ENCODE measurements at regions of chr10 and their contacts with region 1.

Region 1: GRCh38 chr10:88553116-88553752 is 29.9 kb downstream of the RNLS start:
- DNase-seq: peak; percentile 11 to 78
- H3K4me3 ChIP-seq: no peak overlapping the region
- H3K27ac ChIP-seq: peak overlapping the region; percentile 3; the same call in 1 of the 2 replicates
- H3K4me1 ChIP-seq: peaks cover 6% of the 10 kb centered on the region
- H3K27me3 ChIP-seq: no peaks in the 10 kb centered on the region
- CTCF ChIP-seq: peak; percentile 76

Region 2: DNA sequence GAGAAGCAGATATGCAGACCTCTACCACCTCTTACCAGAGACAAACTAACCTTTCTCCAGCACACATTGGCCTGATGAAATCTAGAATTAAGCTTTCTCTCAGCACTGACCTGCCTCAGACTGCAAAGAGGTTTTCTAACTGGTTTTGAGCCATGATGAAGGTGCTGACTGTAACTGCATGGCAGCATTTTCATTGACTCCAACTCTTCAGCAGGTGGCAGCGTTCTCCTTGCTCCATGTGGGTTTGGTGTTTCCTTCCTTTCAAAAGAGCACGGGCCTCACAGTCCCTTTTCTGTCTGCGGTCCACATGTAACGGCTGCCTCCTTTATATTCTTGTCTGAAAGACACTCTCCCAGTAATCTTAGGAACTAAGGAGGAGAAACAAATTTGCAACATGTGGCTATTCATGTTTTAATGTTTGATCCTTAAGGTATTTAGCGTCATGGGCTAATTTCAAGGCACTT is 702.5 kb before region 1 on chr10:
- CTCF ChIA-PET with region 1: no interaction called
- POLR2A ChIA-PET with region 1: no interaction called
- intact Hi-C with region 1: loop called (anchors 1 kb)
- DNase-seq: peak in 1 of 2 experiments; percentile 44
- H3K4me3 ChIP-seq: no peak overlapping the region
- H3K27ac ChIP-seq: no peak overlapping the region
- H3K4me1 ChIP-seq: peaks cover 5% of the 10 kb centered on the region; the same call in 1 of the 2 replicates
- H3K27me3 ChIP-seq: no peaks in the 10 kb centered on the region
- CTCF ChIP-seq: peak; percentile 46

Region 3: GRCh38 chr10:88042160-88043100 is 510.8 kb before region 1 on chr10:
- CTCF ChIA-PET with region 1: no interaction called
- POLR2A ChIA-PET with region 1: no interaction called
- intact Hi-C with region 1: loop called (anchors 1 kb)
- DNase-seq: peak; percentile 52 to 67
- H3K4me3 ChIP-seq: no peak overlapping the region
- H3K27ac ChIP-seq: no peak overlapping the region
- H3K4me1 ChIP-seq: peaks cover 29% of the 10 kb centered on the region
- H3K27me3 ChIP-seq: no peaks in the 10 kb centered on the region
- CTCF ChIP-seq: no peak

Region 4: DNA sequence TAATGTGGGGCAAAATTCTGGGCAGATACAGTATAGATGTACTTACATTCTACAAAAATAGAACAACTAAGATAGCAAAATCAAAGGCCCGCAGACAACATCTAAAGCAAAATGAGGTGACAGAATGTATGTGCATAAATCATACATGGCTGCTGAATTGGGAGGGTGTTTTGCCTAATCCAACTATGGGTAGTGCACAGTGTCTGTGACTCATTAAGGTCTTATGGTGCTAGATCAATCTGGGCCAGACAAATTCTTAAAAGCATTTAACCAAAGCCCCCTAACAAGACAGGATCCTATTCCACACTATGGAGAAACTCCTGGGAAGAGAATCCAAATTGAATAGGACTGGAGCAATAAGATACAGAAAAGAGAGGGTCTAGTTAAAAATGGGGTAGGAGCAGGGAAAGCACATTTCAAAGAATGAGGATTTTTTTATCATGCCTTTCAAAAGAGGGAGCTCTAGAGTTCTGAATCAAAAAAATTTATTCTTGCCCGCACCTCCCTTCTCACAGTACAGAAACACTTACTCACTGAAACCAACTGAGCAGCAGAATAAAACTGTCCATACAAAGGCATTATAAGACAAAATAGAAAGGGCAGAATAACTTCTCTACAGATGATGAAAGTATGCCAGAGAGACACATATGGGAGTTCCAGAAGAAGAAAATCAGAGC is 151.4 kb before region 1 on chr10:
- CTCF ChIA-PET with region 1: no interaction called
- POLR2A ChIA-PET with region 1: interaction called, 5 read pairs
- intact Hi-C with region 1: loop called (anchors 5 kb)
- DNase-seq: no peak
- H3K4me3 ChIP-seq: no peak overlapping the region
- H3K27ac ChIP-seq: no peak overlapping the region
- H3K4me1 ChIP-seq: no peaks in the 10 kb centered on the region
- H3K27me3 ChIP-seq: no peaks in the 10 kb centered on the region
- CTCF ChIP-seq: peak; percentile 36; the same call in 1 of the 2 replicates